Activated B cell treated with CpG ODN at 0.5 μM for 24 hours (primary cell): ENCODE measurements at regions of chr7 and their contacts with region 1.

Region 1: DNA sequence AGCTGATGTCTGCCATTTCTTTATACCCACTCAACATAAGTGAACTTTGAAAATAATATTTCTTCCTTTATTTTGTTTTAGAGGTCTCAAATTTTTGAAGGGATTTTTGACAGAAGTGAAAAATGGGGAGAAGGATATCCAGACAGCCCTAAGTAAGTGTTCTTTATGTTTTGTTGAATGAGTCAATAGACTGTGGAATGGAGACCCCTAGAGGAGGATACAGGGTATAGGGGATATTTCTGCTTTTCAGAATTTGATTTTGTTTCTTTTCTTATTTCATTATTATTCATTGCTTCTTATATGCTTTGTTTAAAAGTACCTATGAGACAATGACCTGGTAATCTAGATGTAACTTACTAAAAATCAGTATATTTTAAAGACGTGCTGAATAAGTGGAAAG is 34.4 kb downstream of the PLEKHA8 start:
- DNase-seq: no peak
- ATAC-seq: peak; percentile 87
- H3K4me3 Mint-ChIP-seq: no peak overlapping the region
- H3K27ac Mint-ChIP-seq: peak overlapping the region; percentile 50
- H3K4me1 Mint-ChIP-seq: peaks cover 20% of the 10 kb centered on the region
- H3K27me3 Mint-ChIP-seq: no peaks in the 10 kb centered on the region
- CTCF ChIP-seq: peak; percentile 42

Region 2: GRCh38 chr7:29878081-29878688 is 184.4 kb before region 1 on chr7:
- CTCF ChIA-PET with region 1: interaction called, 76 read pairs
- POLR2A ChIA-PET with region 1: no interaction called
- intact Hi-C with region 1: loop called (anchors 1 kb)
- DNase-seq: no peak
- ATAC-seq: peak; percentile 31
- H3K4me3 Mint-ChIP-seq: no peak overlapping the region
- H3K27ac Mint-ChIP-seq: no peak overlapping the region
- H3K4me1 Mint-ChIP-seq: peaks cover 3% of the 10 kb centered on the region
- H3K27me3 Mint-ChIP-seq: peaks cover 12% of the 10 kb centered on the region
- CTCF ChIP-seq: peak; percentile 37

Region 3: GRCh38 chr7:29955799-29956486 is 106.6 kb before region 1 on chr7:
- CTCF ChIA-PET with region 1: interaction called, 27 read pairs
- POLR2A ChIA-PET with region 1: no interaction called
- intact Hi-C with region 1: no loop called
- DNase-seq: no peak
- ATAC-seq: peak; percentile 92
- H3K4me3 Mint-ChIP-seq: no peak overlapping the region
- H3K27ac Mint-ChIP-seq: peak overlapping the region; percentile 72
- H3K4me1 Mint-ChIP-seq: peaks cover 29% of the 10 kb centered on the region
- H3K27me3 Mint-ChIP-seq: no peaks in the 10 kb centered on the region
- CTCF ChIP-seq: no peak

Region 4: DNA sequence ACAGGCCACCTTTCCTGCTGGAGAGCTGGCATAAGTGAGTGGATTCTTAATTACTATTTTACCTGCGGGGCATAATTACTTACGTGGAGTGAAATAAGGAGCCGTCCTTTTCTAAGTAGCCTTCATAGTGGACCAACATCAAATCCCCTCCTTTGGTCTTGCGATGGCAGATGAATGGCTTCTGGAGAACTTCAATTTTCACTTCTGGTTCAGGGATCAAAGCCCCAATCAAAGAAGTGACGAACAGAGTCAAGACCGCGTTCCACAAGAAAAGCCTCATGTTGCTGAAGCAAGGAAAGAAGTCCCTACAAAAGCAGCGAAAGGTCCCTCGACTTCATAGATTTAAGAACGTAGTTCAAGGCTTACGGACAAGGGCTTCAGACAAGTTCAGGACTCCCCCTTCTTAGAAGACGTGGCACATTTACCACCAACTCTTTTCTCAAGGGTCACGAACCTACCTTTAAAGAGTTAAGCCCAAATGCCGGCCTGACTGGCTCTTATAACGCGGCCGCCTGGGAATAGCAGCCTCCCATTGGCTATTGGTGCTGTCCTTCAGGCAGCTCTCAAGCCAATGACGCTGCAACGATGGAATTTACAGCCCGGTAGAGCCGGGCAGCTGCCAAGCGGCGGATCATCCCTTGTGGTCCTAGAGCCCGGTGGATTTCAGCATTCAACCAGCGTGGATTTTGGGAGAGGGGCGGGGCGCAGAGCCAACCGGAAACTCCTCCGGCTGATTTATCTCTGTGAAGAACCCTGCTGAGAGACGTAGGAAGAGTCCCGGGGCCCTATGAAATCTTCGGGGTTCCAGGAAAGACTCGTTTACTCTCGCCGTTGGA is 36.1 kb before region 1 on chr7 and contains the start of gene FKBP14:
- CTCF ChIA-PET with region 1: interaction called, 11 read pairs
- POLR2A ChIA-PET with region 1: interaction called, 6 read pairs
- intact Hi-C with region 1: loop called (anchors 1 kb)
- DNase-seq: peak; percentile 72
- ATAC-seq: peak; percentile 76
- H3K4me3 Mint-ChIP-seq: no peak within 1 kb of the TSS
- H3K27ac Mint-ChIP-seq: peak within 1 kb of the TSS; percentile 91
- H3K4me1 Mint-ChIP-seq: peaks cover 38% of the 10 kb centered on the region
- H3K27me3 Mint-ChIP-seq: no peaks in the 10 kb centered on the region
- CTCF ChIP-seq: no peak
- total RNA-seq, gene FKBP14: 7.7 and 11.4 TPM in 2 replicates

Region 5: GRCh38 chr7:30348083-30348560 is 285.5 kb after region 1 on chr7:
- CTCF ChIA-PET with region 1: interaction called, 4 read pairs
- POLR2A ChIA-PET with region 1: no interaction called
- intact Hi-C with region 1: loop called (anchors 5 kb)
- DNase-seq: no peak
- ATAC-seq: peak; percentile 83
- H3K4me3 Mint-ChIP-seq: peak overlapping the region; percentile 32
- H3K27ac Mint-ChIP-seq: peak overlapping the region; percentile 86
- H3K4me1 Mint-ChIP-seq: peaks cover 65% of the 10 kb centered on the region
- H3K27me3 Mint-ChIP-seq: no peaks in the 10 kb centered on the region
- CTCF ChIP-seq: no peak